Dendritic cell treated with granulocyte-macrophage colony-stimulating factor and Interleukin-4, amounts not matched to agents 40 ng/mL and 50 ng/mL, for 4 days (primary cell): ENCODE measurements at regions of chr14 and their contacts with region 1.

Region 1: GRCh38 chr14:56422703-56423213 is 156.8 kb upstream of the TMEM260 start:
- H3K4me3 Mint-ChIP-seq: no peak overlapping the region
- H3K27ac Mint-ChIP-seq: no peak overlapping the region
- H3K4me1 Mint-ChIP-seq: peaks cover 7% of the 10 kb centered on the region
- H3K27me3 Mint-ChIP-seq: peaks cover 9% of the 10 kb centered on the region

Region 2: GRCh38 chr14:55571125-55571889 is 851.5 kb before region 1 on chr14:
- intact Hi-C with region 1: no loop called
- H3K4me3 Mint-ChIP-seq: no peak overlapping the region
- H3K27ac Mint-ChIP-seq: no peak overlapping the region
- H3K4me1 Mint-ChIP-seq: no peaks in the 10 kb centered on the region
- H3K27me3 Mint-ChIP-seq: no peaks in the 10 kb centered on the region

Region 3: DNA sequence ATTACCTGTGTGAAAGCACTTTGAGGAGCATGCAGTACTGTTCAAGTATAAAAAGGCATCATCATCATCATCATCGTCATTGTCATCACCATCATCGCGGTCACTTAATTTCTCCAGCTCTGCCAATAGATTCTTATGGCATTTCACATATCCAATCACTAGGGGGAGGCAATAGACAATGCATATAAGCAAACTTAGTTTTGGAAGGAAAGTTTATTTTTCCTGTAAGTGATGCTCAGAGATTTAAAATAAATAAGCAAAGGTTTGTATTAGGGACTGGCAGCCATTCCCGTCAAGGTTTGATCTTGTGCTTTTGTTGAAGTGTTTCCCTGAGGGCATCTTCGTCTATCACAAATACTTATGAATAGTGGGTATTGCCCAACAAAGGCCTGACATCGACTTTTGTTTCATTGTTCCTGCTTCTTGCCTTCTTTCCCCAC is 715.4 kb before region 1 on chr14:
- intact Hi-C with region 1: loop called (anchors 1 kb)
- H3K4me3 Mint-ChIP-seq: no peak overlapping the region
- H3K27ac Mint-ChIP-seq: no peak overlapping the region
- H3K4me1 Mint-ChIP-seq: peaks cover 20% of the 10 kb centered on the region
- H3K27me3 Mint-ChIP-seq: no peaks in the 10 kb centered on the region

Region 4: DNA sequence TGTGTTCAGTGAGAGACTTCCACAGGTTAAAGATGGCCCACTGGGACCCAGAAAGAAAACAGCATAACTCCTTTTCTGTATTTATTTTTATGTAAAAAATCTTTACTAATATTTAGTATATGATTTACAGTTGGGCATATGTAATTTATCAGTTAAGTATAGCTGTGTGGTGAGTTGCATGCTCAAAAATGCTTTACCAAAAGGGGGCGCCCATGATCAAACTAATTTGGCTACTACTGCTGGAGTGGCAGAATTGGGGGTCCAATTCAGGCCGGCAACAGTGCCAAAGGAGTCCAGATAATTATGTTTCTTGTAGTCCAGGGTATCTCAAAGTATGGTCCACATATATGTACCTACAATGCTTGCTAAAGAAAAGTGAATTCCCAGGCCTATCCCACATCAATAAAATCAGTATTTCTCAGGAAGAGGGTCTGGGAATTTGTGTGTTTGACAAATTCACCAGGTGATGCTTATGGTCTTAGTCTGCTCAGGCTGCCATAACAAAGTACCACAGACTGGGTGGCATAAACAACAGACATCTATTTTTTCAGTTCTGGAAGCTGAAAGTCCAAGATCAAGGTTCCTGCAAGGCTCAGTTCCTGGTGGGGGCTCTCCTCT is 690.8 kb before region 1 on chr14:
- intact Hi-C with region 1: loop called (anchors 2 kb)
- H3K4me3 Mint-ChIP-seq: no peak overlapping the region
- H3K27ac Mint-ChIP-seq: no peak overlapping the region
- H3K4me1 Mint-ChIP-seq: peaks cover 5% of the 10 kb centered on the region
- H3K27me3 Mint-ChIP-seq: no peaks in the 10 kb centered on the region

Region 5: DNA sequence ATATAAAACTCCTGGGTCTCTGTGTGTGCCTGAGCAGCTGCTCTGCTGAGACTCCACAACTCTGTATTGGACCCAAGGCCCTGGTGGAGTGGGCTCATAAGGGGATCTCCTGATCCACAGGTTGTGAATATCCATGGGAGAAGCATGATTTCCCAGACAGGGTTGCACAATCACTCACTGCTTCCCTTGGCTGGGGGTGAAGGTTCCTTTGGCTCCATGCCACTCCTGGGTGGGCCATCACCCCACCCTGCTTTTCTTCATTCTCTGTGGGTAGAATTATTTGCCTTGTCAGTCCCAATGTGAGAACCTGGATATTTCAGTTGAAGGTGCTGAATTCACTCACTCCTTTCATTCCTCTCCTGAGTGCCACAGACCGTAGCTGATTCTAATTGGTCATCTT is 48.3 kb before region 1 on chr14:
- intact Hi-C with region 1: no loop called
- H3K4me3 Mint-ChIP-seq: no peak overlapping the region
- H3K27ac Mint-ChIP-seq: no peak overlapping the region
- H3K4me1 Mint-ChIP-seq: peaks cover 29% of the 10 kb centered on the region
- H3K27me3 Mint-ChIP-seq: peaks cover 3% of the 10 kb centered on the region

Region 6: DNA sequence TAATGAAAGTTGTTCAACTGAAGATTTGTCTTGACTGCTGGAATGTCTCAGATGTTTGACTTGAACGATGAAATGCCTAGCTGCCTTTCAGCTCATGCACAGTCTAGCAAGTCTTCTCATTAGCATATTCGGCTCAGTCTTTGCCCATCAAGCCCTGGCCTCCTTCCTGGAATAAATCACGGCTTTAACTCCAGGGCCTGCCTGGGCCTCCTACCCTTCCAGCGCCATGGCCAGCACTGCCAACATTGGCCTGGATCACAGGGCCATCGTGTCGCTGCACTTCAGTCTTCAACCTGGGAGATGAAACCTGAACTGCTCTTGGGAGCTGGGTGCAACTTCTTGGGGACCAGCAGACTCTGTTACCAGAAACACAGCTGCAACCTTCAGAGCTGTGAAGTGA is 30.2 kb after region 1 on chr14:
- intact Hi-C with region 1: no loop called
- H3K4me3 Mint-ChIP-seq: no peak overlapping the region
- H3K27ac Mint-ChIP-seq: no peak overlapping the region
- H3K4me1 Mint-ChIP-seq: no peaks in the 10 kb centered on the region
- H3K27me3 Mint-ChIP-seq: peaks cover 3% of the 10 kb centered on the region